Heart right ventricle (tissue), 16 donors: ENCODE measurements at regions of chr1 and their contacts with region 1.

Region 1: DNA sequence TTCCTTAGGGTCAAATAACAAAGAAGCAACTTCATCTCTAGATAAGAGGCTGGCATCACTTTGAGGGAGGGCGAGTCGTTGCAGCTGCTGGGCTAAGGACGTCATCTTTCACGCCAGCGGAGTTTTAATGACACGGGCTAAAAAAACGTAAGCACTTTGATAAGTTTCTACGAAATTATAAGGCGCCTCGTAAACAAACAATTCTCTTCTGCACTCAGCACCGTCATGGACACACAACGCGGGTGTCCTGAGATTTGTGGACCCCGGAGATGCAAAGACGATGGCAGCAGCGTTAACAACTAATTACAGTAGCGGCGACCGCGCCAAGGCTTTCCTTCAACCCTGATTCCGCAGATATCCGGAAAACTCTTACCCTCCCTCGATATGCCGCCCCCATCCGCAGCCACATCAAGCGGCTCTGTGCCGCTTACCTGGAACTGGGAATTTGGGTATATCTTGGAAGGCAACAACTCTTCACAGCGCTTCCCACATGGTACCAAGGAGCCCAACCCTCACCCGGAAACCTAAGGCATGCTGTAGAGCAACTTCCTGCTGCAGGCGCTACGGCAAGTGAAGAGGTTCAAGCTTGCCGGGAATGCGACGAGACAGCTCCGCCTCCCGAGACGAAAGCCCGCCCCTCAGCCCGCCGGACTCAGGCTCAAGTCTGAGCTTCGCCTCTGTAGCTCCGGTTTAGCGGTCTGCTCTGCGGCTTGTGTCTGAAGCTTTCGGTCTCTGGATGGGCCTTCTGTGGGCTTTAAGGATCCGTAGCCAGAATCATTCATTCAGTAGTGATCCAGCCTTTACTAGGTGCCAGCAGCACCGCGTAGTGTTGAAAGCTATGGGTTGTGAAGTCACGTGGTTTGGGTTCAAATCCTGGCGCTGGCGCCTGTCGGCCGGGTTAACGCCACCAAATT is at the start of gene HEATR1:
- DNase-seq: peak; percentile 92 to 94
- ATAC-seq: peak; percentile 94 to 99 (median 98)
- H3K4me3 ChIP-seq: peak within 1 kb of the TSS; percentile 55 to 88 (median 78)
- H3K27ac ChIP-seq: peak within 1 kb of the TSS in 9 of 10 donors; percentile 51 to 89 (median 84)
- H3K4me1 ChIP-seq: peaks cover 0 to 23% (median 16%) of the 10 kb centered on the region in 9 donors
- H3K27me3 ChIP-seq: peaks cover 0 to 16% (median 6%) of the 10 kb centered on the region in 7 donors
- CTCF ChIP-seq: peak in 3 of 9 donors; percentile 12 to 16 (median 13)
- total RNA-seq, gene HEATR1: 7.8 to 15.5 (median 10.8) TPM

Region 2: GRCh38 chr1:236558069-236558468 is 46.2 kb before region 1 on chr1:
- intact Hi-C with region 1: loop called in 1 of 10 experiments (anchors 5 kb)
- DNase-seq: no peak
- ATAC-seq: no peak
- H3K4me3 ChIP-seq: no peak overlapping the region
- H3K27ac ChIP-seq: no peak overlapping the region
- H3K4me1 ChIP-seq: no peaks in the 10 kb centered on the region
- H3K27me3 ChIP-seq: no peaks in the 10 kb centered on the region
- CTCF ChIP-seq: no peak

Region 3: DNA sequence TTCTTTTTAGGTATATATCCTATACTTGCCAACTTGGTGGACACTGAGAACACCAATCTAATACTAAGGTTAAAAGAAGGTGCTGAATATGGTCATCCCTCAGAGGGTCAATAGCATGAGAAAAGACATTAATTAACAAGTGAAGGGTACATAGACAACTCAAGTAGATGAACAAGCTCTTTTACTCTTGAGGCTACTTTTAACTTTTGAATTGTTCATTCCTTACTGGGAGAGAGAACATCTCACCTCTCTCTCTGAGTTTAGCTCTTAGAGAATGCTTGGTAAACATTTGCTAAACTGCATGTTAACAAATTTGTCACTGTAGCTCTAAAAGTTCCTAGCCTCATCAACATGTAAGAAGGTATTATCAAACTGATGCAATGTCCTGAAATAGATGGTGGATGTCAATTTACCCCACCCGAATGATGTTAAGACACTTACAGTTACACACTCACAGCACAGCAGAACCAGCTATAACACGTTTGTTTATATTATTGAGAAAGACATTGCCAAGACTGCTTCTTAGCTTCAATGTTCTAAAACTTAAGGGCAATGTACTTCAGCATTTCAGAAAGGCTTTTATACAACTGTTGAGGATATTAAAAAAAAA is 35.9 kb before region 1 on chr1:
- intact Hi-C with region 1: no loop called
- DNase-seq: no peak
- ATAC-seq: no peak
- H3K4me3 ChIP-seq: no peak overlapping the region
- H3K27ac ChIP-seq: no peak overlapping the region
- H3K4me1 ChIP-seq: no peaks in the 10 kb centered on the region
- H3K27me3 ChIP-seq: no peaks in the 10 kb centered on the region
- CTCF ChIP-seq: no peak

Region 4: GRCh38 chr1:236685917-236686814 is 81.9 kb after region 1 on chr1 and contains the start of gene ACTN2:
- intact Hi-C with region 1: loop called in 1 of 10 experiments (anchors 5 kb)
- DNase-seq: peak; percentile 54 to 77
- ATAC-seq: peak; percentile 22 to 81 (median 58)
- H3K4me3 ChIP-seq: peak within 1 kb of the TSS; percentile 42 to 74 (median 64)
- H3K27ac ChIP-seq: peak within 1 kb of the TSS; percentile 87 to 99 (median 95)
- H3K4me1 ChIP-seq: peaks cover 0 to 15% (median 4%) of the 10 kb centered on the region in 9 donors
- H3K27me3 ChIP-seq: peaks cover 0 to 45% (median 6%) of the 10 kb centered on the region in 7 donors
- CTCF ChIP-seq: no peak
- total RNA-seq, gene ACTN2: 2,366 to 4,290 (median 3,682) TPM

Region 5: GRCh38 chr1:236774926-236775325 is 170.7 kb after region 1 on chr1:
- intact Hi-C with region 1: loop called in 2 of 10 experiments (anchors 1 to 5 kb)
- DNase-seq: peak in 1 of 2 donors; percentile 16
- ATAC-seq: peak in 7 of 8 donors; percentile 41 to 74 (median 70)
- H3K4me3 ChIP-seq: no peak overlapping the region
- H3K27ac ChIP-seq: no peak overlapping the region
- H3K4me1 ChIP-seq: no peaks in the 10 kb centered on the region
- H3K27me3 ChIP-seq: peaks cover 0 to 4% (median 0%) of the 10 kb centered on the region in 7 donors
- CTCF ChIP-seq: peak in 8 of 9 donors; percentile 20 to 56 (median 38)

Region 6: DNA sequence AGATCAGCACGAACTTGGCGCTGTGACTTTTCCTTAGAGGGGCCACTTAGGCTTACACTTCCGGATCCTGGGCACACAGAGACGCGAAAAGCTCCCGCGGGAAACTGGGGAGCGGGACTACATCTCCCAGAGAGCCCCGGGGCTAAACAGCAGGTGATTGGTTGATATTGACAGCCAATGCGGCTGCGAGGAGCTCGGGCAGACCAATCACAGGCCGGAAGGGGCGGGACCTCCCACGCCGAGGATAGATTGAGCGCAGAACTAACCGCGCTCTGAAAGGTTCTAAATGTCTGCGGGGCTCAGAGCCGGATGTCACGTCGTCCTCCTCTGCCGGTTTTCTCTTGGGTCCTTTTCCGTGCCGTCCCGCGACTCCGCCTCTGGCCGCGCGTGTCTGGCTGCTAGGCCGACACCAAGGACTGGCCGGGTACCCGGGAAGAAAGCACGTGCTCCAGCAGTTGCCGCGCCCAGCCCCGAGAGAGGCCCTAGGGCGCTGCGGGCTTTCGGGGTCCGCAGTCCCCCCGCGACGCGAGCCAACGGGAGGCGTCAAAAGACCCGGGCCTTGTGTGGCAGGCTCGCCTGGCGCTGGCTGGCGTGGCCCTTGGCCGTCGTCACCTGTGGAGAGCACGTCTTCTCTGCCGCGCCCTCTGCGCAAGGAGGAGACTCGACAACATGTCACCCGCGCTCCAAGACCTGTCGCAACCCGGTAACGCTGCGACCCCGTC is 190.9 kb after region 1 on chr1 and contains the start of gene MTR:
- intact Hi-C with region 1: loop called in 5 of 10 experiments (anchors 10 kb)
- DNase-seq: peak; percentile 97 to 99
- ATAC-seq: peak; percentile 98 to 99 (median 99)
- H3K4me3 ChIP-seq: peak within 1 kb of the TSS; percentile 65 to 98 (median 89)
- H3K27ac ChIP-seq: peak within 1 kb of the TSS; percentile 85 to 97 (median 94)
- H3K4me1 ChIP-seq: peaks cover 0 to 45% (median 35%) of the 10 kb centered on the region in 9 donors
- H3K27me3 ChIP-seq: peaks cover 0 to 5% (median 0%) of the 10 kb centered on the region in 7 donors
- CTCF ChIP-seq: no peak
- total RNA-seq, gene MTR: 39.4 to 100 (median 71.6) TPM

Region 7: GRCh38 chr1:236868625-236869467 is 264.6 kb after region 1 on chr1:
- intact Hi-C with region 1: loop called in 1 of 10 experiments (anchors 10 kb)
- DNase-seq: no peak
- ATAC-seq: no peak
- H3K4me3 ChIP-seq: no peak overlapping the region
- H3K27ac ChIP-seq: peak overlapping the region in 1 of 10 donors; percentile 86
- H3K4me1 ChIP-seq: peaks cover 0 to 46% (median 18%) of the 10 kb centered on the region in 9 donors
- H3K27me3 ChIP-seq: no peaks in the 10 kb centered on the region
- CTCF ChIP-seq: peak; percentile 69 to 96 (median 81)

Region 8: DNA sequence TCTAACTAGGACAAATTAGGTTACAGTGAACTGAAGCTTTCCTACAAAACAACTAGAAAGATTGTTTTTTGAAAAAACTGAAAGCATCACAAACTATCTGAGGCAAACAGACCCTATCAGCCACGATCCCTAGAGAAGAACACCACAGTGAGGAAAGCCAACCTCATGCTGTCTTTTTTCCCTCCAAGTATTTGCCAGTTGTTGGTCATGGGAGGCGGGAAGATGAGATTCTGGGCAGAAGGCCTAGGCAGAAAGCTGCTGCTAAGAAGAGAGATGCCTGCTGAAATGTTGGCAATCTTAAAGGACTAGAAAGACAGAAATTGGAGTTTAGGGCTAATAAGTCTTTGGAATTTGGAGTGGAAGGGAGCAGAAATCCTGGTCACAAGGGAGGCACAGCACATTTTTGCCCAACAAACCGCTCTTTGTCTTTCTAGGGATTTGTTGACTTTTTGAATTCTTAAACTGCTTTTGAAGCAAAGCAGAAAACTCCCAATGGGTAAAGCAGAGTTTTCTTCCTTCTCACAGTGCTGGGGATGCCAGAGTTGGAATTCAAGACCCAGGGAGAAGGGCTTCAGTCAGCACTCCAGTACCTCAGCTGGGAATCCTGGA is 316.1 kb after region 1 on chr1:
- intact Hi-C with region 1: no loop called
- DNase-seq: no peak
- ATAC-seq: no peak
- H3K4me3 ChIP-seq: no peak overlapping the region
- H3K27ac ChIP-seq: no peak overlapping the region
- H3K4me1 ChIP-seq: peaks cover 0 to 6% (median 0%) of the 10 kb centered on the region in 9 donors
- H3K27me3 ChIP-seq: no peaks in the 10 kb centered on the region
- CTCF ChIP-seq: no peak